ENCODE measurements at regions of chr6 and their contacts with region 1.

Region 1: GRCh38 chr6:67068781-67069180 is 1361.8 kb upstream of the EYS start:
- DNase-seq: no peak
- ATAC-seq: no peak
- H3K4me3 ChIP-seq: no peak overlapping the region
- H3K27ac ChIP-seq: no peak overlapping the region
- H3K4me1 ChIP-seq: no peaks in the 10 kb centered on the region
- H3K27me3 ChIP-seq: no peaks in the 10 kb centered on the region
- CTCF ChIP-seq: no peak

Region 2: GRCh38 chr6:66662196-66662595 is 406.6 kb before region 1 on chr6:
- CTCF ChIA-PET with region 1: no interaction called
- POLR2A ChIA-PET with region 1: no interaction called
- intact Hi-C with region 1: loop called (anchors 2 kb)
- DNase-seq: peak; percentile 52
- ATAC-seq: no peak; the same call in 1 of the 2 replicates
- H3K4me3 ChIP-seq: no peak overlapping the region
- H3K27ac ChIP-seq: no peak overlapping the region
- H3K4me1 ChIP-seq: no peaks in the 10 kb centered on the region
- H3K27me3 ChIP-seq: no peaks in the 10 kb centered on the region
- CTCF ChIP-seq: peak; percentile 60

Region 3: GRCh38 chr6:67679571-67680296 is 611.0 kb after region 1 on chr6:
- CTCF ChIA-PET with region 1: interaction called, 3 read pairs
- POLR2A ChIA-PET with region 1: no interaction called
- intact Hi-C with region 1: loop called (anchors 5 kb)
- DNase-seq: peak; percentile 65
- ATAC-seq: peak; percentile 61
- H3K4me3 ChIP-seq: no peak overlapping the region
- H3K27ac ChIP-seq: peak overlapping the region; percentile 65
- H3K4me1 ChIP-seq: peaks cover 43% of the 10 kb centered on the region
- H3K27me3 ChIP-seq: no peaks in the 10 kb centered on the region
- CTCF ChIP-seq: no peak

Region 4: DNA sequence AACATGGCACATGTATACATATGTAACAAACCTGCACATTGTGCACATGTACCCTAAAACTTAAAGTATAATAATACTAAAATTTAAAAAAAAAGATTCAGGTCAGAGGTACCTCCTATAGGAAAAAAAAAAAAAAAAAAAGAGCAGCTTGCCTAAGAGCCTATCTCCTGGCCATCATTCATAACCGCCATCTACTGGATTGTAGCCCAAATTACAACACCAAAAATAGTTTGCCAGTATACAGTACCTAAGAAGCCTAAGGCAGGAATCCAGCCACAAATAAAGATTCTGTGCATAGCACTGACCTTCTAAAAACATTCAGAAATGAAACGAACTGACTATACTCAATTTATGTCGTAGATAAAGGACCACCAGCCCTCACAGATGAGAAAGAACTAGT is 1127.9 kb after region 1 on chr6:
- CTCF ChIA-PET with region 1: no interaction called
- POLR2A ChIA-PET with region 1: no interaction called
- intact Hi-C with region 1: loop called (anchors 1 kb)
- DNase-seq: peak; percentile 65
- ATAC-seq: peak; percentile 57
- H3K4me3 ChIP-seq: no peak overlapping the region
- H3K27ac ChIP-seq: no peak overlapping the region
- H3K4me1 ChIP-seq: no peaks in the 10 kb centered on the region
- H3K27me3 ChIP-seq: no peaks in the 10 kb centered on the region
- CTCF ChIP-seq: peak; percentile 41; the same call in 1 of the 2 replicates

Region 5: GRCh38 chr6:68226460-68226859 is 1157.7 kb after region 1 on chr6:
- CTCF ChIA-PET with region 1: interaction called, 14 read pairs
- POLR2A ChIA-PET with region 1: no interaction called
- intact Hi-C with region 1: loop called (anchors 2 kb)
- DNase-seq: no peak
- ATAC-seq: no peak
- H3K4me3 ChIP-seq: no peak overlapping the region
- H3K27ac ChIP-seq: no peak overlapping the region
- H3K4me1 ChIP-seq: no peaks in the 10 kb centered on the region
- H3K27me3 ChIP-seq: no peaks in the 10 kb centered on the region
- CTCF ChIP-seq: peak; percentile 57; the same call in 1 of the 2 replicates

Region 6: DNA sequence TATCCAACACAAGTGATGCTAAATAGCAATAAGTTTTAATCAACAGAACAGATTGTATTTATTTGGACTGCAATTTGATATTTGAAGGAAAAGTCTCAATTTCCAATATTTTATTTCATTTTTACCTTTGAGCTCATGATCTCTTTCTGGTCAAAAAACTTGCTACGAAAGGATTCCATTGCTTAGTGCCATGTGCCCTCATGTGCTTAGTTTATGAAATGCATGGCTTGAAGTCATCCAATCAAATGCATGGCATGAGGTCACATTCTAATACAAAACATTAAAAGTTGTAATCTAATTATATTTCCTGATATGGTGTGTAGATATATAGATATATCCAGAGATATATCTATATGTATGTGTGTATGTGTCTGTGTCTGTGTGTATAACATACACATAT is 1245.1 kb after region 1 on chr6:
- CTCF ChIA-PET with region 1: interaction called, 6 read pairs
- POLR2A ChIA-PET with region 1: no interaction called
- intact Hi-C with region 1: loop called (anchors 10 kb)
- DNase-seq: peak; percentile 22
- ATAC-seq: no peak
- H3K4me3 ChIP-seq: no peak overlapping the region
- H3K27ac ChIP-seq: no peak overlapping the region
- H3K4me1 ChIP-seq: peaks cover 11% of the 10 kb centered on the region; the same call in 1 of the 2 replicates
- H3K27me3 ChIP-seq: no peaks in the 10 kb centered on the region
- CTCF ChIP-seq: peak; percentile 60

Measured in PC-3 (cell line).